ENCODE measurements at regions of chr1 and their contacts with region 1.

Region 1: GRCh38 chr1:151805066-151805820 is at the start of gene LINGO4:
- DNase-seq: no peak
- ATAC-seq: no peak
- H3K4me3 ChIP-seq: no peak within 1 kb of the TSS
- H3K27ac ChIP-seq: no peak within 1 kb of the TSS
- H3K4me1 ChIP-seq: peaks cover 11% of the 10 kb centered on the region
- H3K27me3 ChIP-seq: no peaks in the 10 kb centered on the region
- CTCF ChIP-seq: no peak
- POLR2A ChIP-seq: peak in 1 of 3 donors; percentile 24
- total RNA-seq, gene LINGO4: 0.66 to 1.6 TPM

Region 2: DNA sequence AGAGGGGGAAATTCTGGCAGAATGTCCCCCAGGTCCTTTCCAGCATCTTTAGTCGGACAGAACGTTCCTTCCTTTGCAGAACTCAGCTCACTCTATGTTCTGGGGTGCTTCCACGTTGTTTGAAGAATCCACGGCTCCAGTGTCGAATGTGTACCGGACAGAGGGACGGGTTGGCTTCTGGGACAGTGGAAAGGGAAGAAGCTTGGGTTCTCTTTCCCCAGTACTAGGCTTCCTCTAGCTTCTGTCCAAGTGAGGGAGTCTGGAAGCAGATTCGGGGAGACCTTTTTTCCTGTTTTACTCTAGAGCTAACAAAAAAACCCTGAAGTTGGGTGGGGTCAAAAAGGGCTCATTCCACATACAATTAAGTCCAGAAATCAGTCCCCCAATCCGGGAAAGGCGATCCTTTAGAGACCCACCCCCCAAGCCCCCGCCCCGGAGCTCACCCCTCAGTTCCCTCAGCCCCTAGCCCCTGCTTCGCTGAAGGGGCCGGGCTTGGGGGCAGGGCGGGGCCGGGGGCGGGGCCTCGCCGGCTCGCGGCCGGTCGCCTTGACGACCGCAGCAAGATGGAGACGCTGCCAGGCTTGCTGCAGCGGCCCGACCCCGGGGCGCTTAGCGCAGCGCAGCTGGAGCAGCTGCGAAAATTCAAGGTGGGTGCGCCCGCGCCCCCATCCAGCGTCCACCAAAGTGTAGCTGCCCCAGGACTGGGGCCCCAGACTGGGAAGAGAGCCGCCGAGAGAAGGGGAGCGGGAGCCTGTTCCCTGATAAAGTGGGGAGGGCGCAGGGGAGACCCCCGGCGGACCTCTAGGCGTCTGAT is 84.1 kb before region 1 on chr1 and contains the start of gene RIIAD1:
- intact Hi-C with region 1: no loop called
- DNase-seq: peak in 2 of 4 donors; percentile 23 to 50
- ATAC-seq: peak; percentile 77
- H3K4me3 ChIP-seq: peak within 1 kb of the TSS in 1 of 2 donors; percentile 17
- H3K27ac ChIP-seq: peak within 1 kb of the TSS in 3 of 4 donors; percentile 28 to 45 (median 34)
- H3K4me1 ChIP-seq: peaks cover 26% of the 10 kb centered on the region
- H3K27me3 ChIP-seq: peaks cover 0 to 6% of the 10 kb centered on the region in 2 donors
- CTCF ChIP-seq: no peak
- POLR2A ChIP-seq: no peak
- total RNA-seq, gene RIIAD1: not detected

Region 3: DNA sequence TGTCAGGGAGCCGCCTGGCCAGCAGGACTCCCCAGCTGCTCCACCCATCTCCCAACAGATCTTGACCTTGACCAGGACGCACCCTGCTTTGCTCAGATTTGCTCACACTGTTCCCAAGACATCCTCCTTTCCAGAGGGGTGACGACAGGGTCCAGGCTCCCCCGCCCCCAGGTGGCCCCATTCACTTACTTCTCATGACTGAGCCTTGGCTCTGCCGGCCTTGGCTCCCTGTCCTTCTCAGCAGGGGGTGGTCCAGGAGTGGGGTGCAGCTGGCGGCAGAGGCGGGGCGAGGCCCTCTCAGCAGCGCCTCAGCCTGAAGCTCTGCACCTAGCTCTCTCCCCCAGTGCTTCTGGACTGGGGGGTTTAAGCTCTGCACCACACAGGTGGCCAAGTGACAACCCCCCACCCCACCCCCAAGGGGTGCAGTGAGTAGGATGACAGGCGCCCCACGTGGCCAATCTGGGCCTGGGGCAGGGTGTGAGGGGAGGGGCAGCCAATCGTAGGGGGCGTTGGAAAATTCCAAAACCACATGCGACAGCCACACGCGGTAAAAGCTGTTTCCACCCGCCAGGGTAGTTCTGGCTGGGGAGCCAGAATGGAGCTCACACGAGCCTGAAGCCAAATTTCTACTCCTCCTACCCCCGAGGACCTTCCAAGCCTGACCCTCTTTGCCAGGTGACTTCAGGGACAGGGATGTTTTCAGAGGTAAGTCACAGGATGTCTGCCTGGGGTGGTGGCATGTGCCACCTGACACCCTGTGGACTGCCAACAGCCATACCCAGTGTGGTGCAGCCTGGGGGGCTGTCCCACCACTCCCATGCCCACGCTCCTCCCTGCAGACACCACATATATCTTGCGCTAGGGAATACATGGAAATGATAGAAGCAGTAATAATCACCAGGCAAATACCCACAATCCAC is 20.8 kb after region 1 on chr1:
- intact Hi-C with region 1: loop called (anchors 2 kb)
- DNase-seq: no peak
- ATAC-seq: no peak
- H3K4me3 ChIP-seq: no peak overlapping the region
- H3K27ac ChIP-seq: no peak overlapping the region
- H3K4me1 ChIP-seq: peaks cover 67% of the 10 kb centered on the region
- H3K27me3 ChIP-seq: no peaks in the 10 kb centered on the region
- CTCF ChIP-seq: no peak
- POLR2A ChIP-seq: no peak

Region 4: GRCh38 chr1:152127670-152128069 is 322.4 kb after region 1 on chr1:
- intact Hi-C with region 1: no loop called
- DNase-seq: no peak
- ATAC-seq: no peak
- H3K4me3 ChIP-seq: no peak overlapping the region
- H3K27ac ChIP-seq: no peak overlapping the region
- H3K4me1 ChIP-seq: no peaks in the 10 kb centered on the region
- H3K27me3 ChIP-seq: no peaks in the 10 kb centered on the region
- CTCF ChIP-seq: no peak
- POLR2A ChIP-seq: no peak